ENCODE measurements at regions of chr4 and their contacts with region 1.

Region 1: DNA sequence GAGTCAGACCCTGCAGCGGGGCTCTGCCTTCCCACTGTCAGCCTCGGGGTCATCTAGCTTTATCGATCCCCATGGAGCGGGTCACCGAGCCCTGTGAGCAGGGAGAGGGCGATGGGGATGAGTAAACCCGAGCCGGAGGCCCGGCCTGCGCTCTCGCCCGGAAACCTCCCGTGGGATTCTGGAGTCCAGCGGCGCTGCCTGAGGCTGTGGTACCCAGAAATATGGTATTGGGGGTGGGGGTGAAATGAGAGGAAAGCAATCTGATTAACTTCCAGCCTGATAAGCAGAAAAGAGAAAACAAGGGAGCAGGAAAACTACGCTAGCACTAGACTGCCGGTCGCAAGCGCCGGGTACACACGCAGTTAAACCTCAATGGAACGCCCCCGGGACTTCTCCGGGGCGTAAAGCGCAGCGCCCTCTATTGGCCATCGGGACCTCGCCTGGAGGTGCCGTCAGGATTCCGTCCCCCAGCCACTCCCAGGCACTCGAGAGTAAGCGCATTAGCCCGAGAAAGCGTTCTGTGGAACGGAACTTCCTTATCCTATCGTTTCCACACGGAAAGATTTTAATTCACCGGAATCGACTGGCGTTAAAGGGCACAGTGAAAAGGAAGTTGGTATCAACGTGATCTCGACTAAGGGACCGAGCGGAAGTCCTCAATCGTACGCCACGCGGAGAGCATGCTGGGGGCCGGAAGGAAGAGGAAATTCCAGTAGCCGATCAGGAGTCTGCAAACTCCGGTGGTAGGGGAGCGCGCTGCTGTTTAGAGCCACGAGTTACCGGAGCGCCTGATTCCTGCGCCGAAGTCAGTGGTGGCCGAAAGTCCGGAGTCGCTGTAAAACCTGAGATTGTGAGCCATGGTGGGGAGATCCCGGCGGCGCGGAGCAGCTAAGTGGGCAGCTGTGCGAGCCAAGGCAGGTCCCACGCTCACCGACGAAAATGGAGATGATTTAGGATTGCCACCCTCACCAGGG is at the start of gene UTP3:
- DNase-seq: peak; percentile 96
- H3K4me3 Mint-ChIP-seq: peak within 1 kb of the TSS; percentile 99
- H3K27ac Mint-ChIP-seq: peak within 1 kb of the TSS; percentile 97
- H3K4me1 Mint-ChIP-seq: peaks cover 33% of the 10 kb centered on the region
- H3K27me3 Mint-ChIP-seq: no peaks in the 10 kb centered on the region
- total RNA-seq, gene UTP3: 33.6 to 35.5 TPM

Region 2: DNA sequence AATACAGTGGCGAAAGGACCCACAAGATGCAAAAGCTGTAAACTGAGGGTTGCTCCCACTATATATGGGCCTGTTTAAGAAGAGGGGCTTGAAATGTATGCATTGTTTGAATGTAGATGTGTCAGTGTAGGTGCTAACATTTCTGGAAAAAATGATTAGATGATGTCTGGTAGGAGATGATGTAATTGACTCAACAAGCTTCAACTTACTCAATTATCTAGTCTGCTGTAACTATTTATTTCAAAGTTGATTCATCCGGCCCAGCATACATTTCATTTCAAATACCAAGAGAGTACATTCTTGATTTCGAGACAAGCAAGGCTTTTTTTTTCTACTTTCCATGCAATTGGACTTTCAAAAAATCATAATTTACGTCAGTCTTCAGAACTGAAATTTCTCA is 68.8 kb before region 1 on chr4:
- CTCF ChIA-PET with region 1: interaction called, 3 read pairs
- POLR2A ChIA-PET with region 1: no interaction called
- intact Hi-C with region 1: loop called (anchors 2 kb)
- DNase-seq: no peak
- H3K4me3 Mint-ChIP-seq: no peak overlapping the region
- H3K27ac Mint-ChIP-seq: no peak overlapping the region
- H3K4me1 Mint-ChIP-seq: peaks cover 2% of the 10 kb centered on the region
- H3K27me3 Mint-ChIP-seq: peaks cover under 1% of the 10 kb centered on the region

Region 3: DNA sequence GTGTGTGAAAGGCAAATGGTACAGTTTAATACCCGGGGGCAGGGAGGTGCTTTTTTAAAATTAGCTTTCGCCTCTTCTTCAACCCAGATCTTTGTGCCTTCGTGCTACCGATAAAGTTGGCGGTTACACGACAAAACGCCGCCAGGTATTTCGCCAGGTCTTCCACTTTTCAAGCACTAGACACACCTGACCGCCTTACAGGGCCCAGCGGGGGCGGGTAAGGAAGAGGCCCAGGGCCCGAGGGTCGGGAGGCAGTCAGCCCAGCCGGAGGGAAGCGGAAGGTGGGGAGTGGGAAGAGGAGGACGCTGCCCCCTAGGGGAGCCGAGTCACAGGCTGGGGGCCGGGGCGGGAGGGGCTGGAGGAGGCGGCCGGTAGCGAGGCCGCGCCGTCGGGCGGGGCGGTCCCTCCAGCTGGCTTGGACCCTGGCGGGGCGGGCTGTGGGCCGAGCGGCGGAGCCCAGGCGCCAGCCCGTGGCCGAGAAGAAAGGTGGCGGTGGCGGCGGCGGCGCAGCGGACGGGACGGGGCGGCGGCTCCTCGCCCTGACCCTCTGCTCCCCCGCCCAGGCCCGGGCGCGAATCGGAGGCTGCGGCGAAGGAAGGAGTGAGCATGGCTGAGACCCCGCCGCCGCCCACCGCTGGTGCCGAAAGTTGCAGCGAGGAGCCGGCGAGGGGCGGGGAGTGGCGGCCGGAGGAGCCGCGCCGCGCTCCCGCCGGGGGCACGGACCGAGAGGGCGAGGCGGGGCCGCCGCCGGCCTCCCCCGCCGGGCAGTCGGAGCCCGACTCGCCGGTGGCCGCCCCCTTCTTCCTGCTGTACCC is 16.4 kb after region 1 on chr4:
- CTCF ChIA-PET with region 1: interaction called, 23 read pairs
- POLR2A ChIA-PET with region 1: interaction called, 14 read pairs
- intact Hi-C with region 1: loop called (anchors 1 kb)
- DNase-seq: peak; percentile 75
- H3K4me3 Mint-ChIP-seq: peak overlapping the region; percentile 85
- H3K27ac Mint-ChIP-seq: peak overlapping the region; percentile 80
- H3K4me1 Mint-ChIP-seq: peaks cover 25% of the 10 kb centered on the region
- H3K27me3 Mint-ChIP-seq: no peaks in the 10 kb centered on the region

Region 4: DNA sequence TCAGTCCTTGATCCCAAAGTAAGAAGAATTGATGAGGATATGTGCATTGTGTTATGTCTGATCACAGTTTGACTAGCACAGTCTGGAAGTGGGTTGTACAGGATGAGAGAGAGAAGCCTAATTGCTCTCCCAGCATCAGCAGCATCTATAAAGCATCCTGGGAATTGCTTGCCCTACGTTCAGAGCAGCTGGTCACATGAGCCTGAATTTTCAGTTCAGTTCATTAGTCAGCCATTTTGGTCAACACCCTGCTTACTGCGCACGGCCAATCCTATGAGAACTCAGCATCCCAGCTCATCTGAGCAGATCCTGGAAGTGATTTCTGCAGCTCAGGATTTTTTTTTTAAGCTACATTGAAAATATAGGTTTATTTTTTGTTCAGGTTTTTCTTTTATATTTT is 33.6 kb after region 1 on chr4 and contains the start of gene RUFY3:
- CTCF ChIA-PET with region 1: no interaction called
- POLR2A ChIA-PET with region 1: no interaction called
- intact Hi-C with region 1: no loop called
- DNase-seq: no peak
- H3K4me3 Mint-ChIP-seq: no peak within 1 kb of the TSS
- H3K27ac Mint-ChIP-seq: no peak within 1 kb of the TSS
- H3K4me1 Mint-ChIP-seq: peaks cover 24% of the 10 kb centered on the region
- H3K27me3 Mint-ChIP-seq: no peaks in the 10 kb centered on the region
- total RNA-seq, gene RUFY3: 15.8 to 17.2 TPM

Region 5: GRCh38 chr4:70801265-70801809 is 113.2 kb after region 1 on chr4:
- CTCF ChIA-PET with region 1: no interaction called
- POLR2A ChIA-PET with region 1: no interaction called
- intact Hi-C with region 1: loop called (anchors 1 kb)
- DNase-seq: peak; percentile 60
- H3K4me3 Mint-ChIP-seq: no peak overlapping the region
- H3K27ac Mint-ChIP-seq: no peak overlapping the region
- H3K4me1 Mint-ChIP-seq: peaks cover 10% of the 10 kb centered on the region
- H3K27me3 Mint-ChIP-seq: no peaks in the 10 kb centered on the region

Region 6: DNA sequence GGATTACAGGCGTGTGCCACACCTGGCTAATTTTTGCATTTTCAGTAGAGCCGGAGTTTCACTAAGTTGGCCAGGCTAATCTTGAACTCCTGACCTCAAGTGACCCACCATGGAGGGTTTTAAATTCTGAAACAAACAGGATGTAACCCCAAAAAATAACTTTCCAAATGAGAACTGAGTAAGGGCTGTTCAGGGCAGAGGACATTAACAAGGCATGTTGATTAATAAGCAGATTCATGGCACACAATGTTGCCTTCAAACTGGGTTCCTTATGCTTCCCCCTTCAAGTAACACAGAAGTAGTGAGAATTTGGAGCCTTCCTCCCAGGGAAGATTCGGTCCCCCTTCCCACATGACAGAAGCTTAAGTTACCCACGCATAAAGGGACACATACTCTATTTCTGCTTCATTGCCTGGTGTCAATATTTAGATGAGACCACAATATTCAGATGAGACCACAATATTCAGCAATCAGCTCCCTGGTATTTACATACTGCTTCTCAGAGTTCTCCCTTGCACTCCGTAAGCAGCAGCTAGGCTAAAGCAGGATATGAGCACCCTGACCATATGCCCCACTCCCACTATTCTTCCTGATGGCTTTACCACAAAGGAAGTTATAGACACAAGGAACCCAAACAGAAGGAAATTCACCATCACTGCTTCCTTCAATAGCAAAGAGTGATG is 130.2 kb after region 1 on chr4:
- CTCF ChIA-PET with region 1: no interaction called
- POLR2A ChIA-PET with region 1: no interaction called
- intact Hi-C with region 1: no loop called
- DNase-seq: no peak
- H3K4me3 Mint-ChIP-seq: no peak overlapping the region
- H3K27ac Mint-ChIP-seq: peak overlapping the region; percentile 3
- H3K4me1 Mint-ChIP-seq: peaks cover 8% of the 10 kb centered on the region
- H3K27me3 Mint-ChIP-seq: no peaks in the 10 kb centered on the region

Region 7: GRCh38 chr4:70863099-70863790 is 175.1 kb after region 1 on chr4:
- CTCF ChIA-PET with region 1: no interaction called
- POLR2A ChIA-PET with region 1: no interaction called
- intact Hi-C with region 1: loop called (anchors 1 kb)
- DNase-seq: peak; percentile 39
- H3K4me3 Mint-ChIP-seq: no peak overlapping the region
- H3K27ac Mint-ChIP-seq: peak overlapping the region; percentile 57
- H3K4me1 Mint-ChIP-seq: peaks cover 12% of the 10 kb centered on the region
- H3K27me3 Mint-ChIP-seq: no peaks in the 10 kb centered on the region

Region 8: GRCh38 chr4:70993181-70994068 is 305.3 kb after region 1 on chr4 and contains the start of gene DCK:
- CTCF ChIA-PET with region 1: no interaction called
- POLR2A ChIA-PET with region 1: interaction called, 5 read pairs
- intact Hi-C with region 1: loop called (anchors 1 kb)
- DNase-seq: peak; percentile 91
- H3K4me3 Mint-ChIP-seq: peak within 1 kb of the TSS; percentile 91
- H3K27ac Mint-ChIP-seq: peak within 1 kb of the TSS; percentile 83
- H3K4me1 Mint-ChIP-seq: peaks cover 35% of the 10 kb centered on the region
- H3K27me3 Mint-ChIP-seq: no peaks in the 10 kb centered on the region
- total RNA-seq, gene DCK: 37.0 to 37.2 TPM